GM10248 (cell line): ENCODE measurements at regions of chr11 and their contacts with region 1.

Region 1: GRCh38 chr11:10925144-10925926 is 67.5 kb upstream of the ZBED5 start:
- DNase-seq: no peak
- CTCF ChIP-seq: no peak

Region 2: DNA sequence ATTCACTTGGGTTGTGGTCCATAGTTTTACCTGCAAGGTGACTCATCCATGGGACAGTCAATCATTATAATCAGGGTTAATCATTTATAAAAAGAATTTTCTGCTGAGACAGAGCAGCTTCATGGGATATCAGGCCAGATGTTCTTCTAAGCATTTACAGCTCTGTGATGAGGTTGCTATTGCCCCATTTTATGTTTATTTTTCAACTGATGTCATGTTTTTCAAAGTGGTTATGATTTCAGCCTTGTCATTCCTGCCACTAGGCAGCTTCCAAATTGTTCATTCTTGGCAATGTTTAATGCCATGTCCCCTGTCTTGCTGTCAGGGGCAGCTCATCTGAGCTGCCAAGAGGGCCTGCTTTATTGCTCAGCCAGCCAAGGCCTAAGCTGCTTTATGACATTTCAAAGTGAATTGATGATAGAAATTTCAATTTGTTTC is 31.6 kb before region 1 on chr11:
- CTCF ChIA-PET with region 1: no interaction called
- POLR2A ChIA-PET with region 1: no interaction called
- DNase-seq: no peak
- CTCF ChIP-seq: no peak

Region 3: GRCh38 chr11:10982704-10983510 is 57.6 kb after region 1 on chr11:
- CTCF ChIA-PET with region 1: no interaction called
- POLR2A ChIA-PET with region 1: no interaction called
- DNase-seq: no peak
- CTCF ChIP-seq: no peak

Region 4: DNA sequence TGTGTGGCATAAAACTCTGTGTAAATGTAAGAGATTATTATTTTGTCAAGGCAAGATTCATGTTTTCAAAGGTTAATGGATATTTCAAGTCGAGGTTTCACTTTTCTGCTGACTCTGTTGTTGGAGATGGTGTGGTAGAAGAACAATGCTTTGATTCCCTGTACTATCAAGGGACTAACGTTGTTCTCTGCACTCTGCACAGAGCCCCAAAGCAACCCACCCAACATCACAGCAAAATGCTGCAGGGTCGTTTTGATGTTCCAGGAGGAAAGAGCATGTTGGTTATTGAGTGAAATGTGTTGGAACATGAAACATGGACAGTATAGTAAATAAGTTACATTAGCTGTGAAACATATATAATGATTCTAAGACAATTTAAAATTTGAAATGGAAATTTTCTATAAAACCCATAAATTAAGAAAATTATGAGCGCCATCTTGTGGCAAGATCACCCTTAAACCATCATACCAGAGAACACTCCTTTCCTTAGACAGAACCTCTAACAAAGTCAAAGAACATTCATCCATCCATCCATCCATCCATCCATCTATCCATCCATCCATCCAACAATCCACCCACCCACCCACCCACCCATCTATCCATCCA is 96.9 kb after region 1 on chr11:
- CTCF ChIA-PET with region 1: interaction called, 12 read pairs
- POLR2A ChIA-PET with region 1: no interaction called
- DNase-seq: peak; percentile 40
- CTCF ChIP-seq: peak; percentile 45